ENCODE measurements at regions of chr11 and their contacts with region 1.

Region 1: DNA sequence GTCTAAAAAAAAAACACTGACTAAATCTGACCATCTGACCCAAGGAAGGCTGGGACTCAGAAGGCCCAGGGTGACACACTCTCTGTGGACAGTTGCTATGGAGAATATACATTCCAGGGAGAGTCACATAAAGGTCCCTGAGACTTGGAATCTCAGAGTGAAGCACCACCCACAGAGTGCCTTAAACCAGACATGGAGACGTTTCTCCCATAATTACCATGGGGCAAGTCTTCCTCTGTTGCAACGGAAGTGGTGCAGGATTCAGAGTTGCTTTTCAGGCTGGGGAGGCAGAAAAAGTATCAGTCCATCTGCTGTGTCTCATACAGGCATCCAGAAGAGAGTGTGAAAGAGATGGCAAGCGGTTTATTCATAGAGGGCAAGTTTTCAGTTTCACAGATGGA is 58.7 kb upstream of the SLN start:
- DNase-seq: no peak
- ATAC-seq: peak; percentile 51 to 66
- H3K4me3 ChIP-seq: no peak overlapping the region
- H3K27ac ChIP-seq: peak overlapping the region; percentile 68 to 78 (median 72)
- H3K4me1 ChIP-seq: peaks cover 21 to 29% of the 10 kb centered on the region in 2 donors
- H3K27me3 ChIP-seq: no peaks in the 10 kb centered on the region
- CTCF ChIP-seq: no peak
- POLR2A ChIP-seq: no peak

Region 2: GRCh38 chr11:107583629-107584195 is 186.8 kb before region 1 on chr11:
- in situ Hi-C with region 1: loop called (anchors 5 to 10 kb)
- intact Hi-C with region 1: no loop called
- DNase-seq: no peak
- ATAC-seq: peak in 1 of 2 donors; percentile 54
- H3K4me3 ChIP-seq: no peak overlapping the region
- H3K27ac ChIP-seq: no peak overlapping the region
- H3K4me1 ChIP-seq: no peaks in the 10 kb centered on the region
- H3K27me3 ChIP-seq: no peaks in the 10 kb centered on the region
- CTCF ChIP-seq: no peak
- POLR2A ChIP-seq: no peak

Region 3: GRCh38 chr11:107689317-107690202 is 81.0 kb before region 1 on chr11:
- in situ Hi-C with region 1: loop called in 3 of 4 experiments (anchors 5 to 10 kb)
- intact Hi-C with region 1: loop called (anchors 2 kb)
- DNase-seq: peak; percentile 53 to 56
- ATAC-seq: peak; percentile 79 to 89
- H3K4me3 ChIP-seq: peak overlapping the region in 3 of 4 donors; percentile 9 to 19 (median 13)
- H3K27ac ChIP-seq: peak overlapping the region; percentile 13 to 33 (median 28)
- H3K4me1 ChIP-seq: peaks cover 0 to 3% of the 10 kb centered on the region in 2 donors
- H3K27me3 ChIP-seq: no peaks in the 10 kb centered on the region
- CTCF ChIP-seq: peak; percentile 49 to 74 (median 67)
- POLR2A ChIP-seq: no peak